ENCODE measurements at regions of chr2 and their contacts with region 1.

Region 1: DNA sequence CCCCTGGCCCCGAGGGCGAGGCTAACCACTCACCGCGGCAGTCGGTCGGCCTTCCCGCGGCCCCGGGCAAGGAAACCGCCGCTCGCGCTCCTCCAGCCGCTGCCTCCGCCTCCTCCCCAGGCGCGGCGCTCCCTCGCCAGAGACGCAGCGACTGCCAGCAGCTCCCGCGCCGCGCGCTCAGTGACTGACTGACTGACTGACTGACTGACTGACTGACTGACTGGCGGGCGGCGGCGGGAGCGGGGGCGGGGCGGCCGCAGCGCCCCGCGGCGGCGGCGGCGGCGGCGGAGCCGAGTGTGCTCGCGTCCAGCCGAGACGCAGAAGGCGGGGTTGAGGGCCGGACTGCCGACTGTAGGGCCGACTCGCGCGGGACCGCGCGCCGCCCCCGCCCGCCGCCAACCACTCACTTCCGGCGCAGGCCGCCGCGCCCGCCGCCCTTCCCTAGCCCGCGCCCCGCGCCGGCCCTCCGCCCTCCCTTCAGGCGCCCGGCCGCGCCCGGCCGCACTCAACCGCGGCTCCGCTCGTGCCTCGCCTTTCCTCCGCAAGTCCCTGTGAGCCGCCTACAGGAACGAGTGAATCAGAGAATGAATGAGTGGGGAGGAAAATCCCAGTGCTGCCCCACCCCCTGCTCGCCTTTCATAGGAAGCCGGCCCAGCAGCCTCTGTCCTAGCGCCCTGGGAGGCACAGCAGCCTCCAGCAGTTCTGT is at the start of gene RAPH1:
- DNase-seq: peak; percentile 89
- ATAC-seq: peak; percentile 82
- H3K4me3 ChIP-seq: peak within 1 kb of the TSS; percentile 93
- H3K27ac ChIP-seq: peak within 1 kb of the TSS; percentile 29
- H3K4me1 ChIP-seq: peaks cover 18% of the 10 kb centered on the region
- H3K27me3 ChIP-seq: no peaks in the 10 kb centered on the region
- CTCF ChIP-seq: no peak
- total RNA-seq, gene RAPH1: 7.0 and 40.3 TPM in 2 replicates

Region 2: DNA sequence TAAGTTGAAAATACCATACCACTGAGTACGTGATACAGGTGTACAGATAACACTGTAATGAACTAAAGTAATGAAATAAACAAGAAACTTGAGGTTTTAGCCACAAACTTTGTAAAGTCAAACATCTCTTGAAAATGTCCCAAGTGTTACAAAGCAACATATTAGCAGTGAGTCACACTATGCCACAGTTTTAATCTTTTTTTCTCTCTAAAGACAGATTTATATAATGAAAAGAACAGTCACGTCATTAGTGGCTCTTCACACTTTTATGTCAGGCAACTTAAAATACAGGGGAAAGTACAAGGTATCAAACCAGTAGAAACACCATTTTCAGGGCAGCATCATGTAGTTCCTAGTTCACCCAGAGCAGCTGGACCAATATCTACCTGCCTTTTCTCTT is 42.3 kb before region 1 on chr2:
- CTCF ChIA-PET with region 1: no interaction called
- POLR2A ChIA-PET with region 1: no interaction called
- intact Hi-C with region 1: loop called (anchors 2 kb)
- DNase-seq: peak; percentile 30
- ATAC-seq: peak; percentile 54
- H3K4me3 ChIP-seq: peak overlapping the region; percentile 31; the same call in 1 of the 2 replicates
- H3K27ac ChIP-seq: peak overlapping the region; percentile 49
- H3K4me1 ChIP-seq: peaks cover 22% of the 10 kb centered on the region
- H3K27me3 ChIP-seq: no peaks in the 10 kb centered on the region
- CTCF ChIP-seq: no peak

Region 3: DNA sequence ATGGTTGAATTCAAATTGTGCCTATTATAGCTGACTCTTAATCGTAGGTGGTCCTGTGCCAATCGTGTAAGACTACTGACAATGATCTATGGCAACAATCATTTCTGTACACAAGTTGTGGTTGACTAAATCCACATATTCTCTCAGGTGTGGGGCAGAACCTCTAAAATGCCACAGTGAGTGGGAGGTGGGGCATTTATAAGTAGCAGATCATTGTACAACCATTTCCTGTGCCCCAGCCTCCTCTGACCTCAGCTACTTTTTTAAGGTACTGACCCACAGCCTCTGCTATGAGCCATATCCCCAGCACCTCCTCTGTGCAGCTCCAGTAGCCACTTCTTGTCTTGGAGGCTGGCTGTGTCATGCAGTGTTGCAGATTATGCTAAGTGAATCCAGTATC is 48.5 kb after region 1 on chr2:
- CTCF ChIA-PET with region 1: no interaction called
- POLR2A ChIA-PET with region 1: no interaction called
- intact Hi-C with region 1: loop called (anchors 2 kb)
- DNase-seq: peak; percentile 88
- ATAC-seq: peak; percentile 74
- H3K4me3 ChIP-seq: no peak overlapping the region
- H3K27ac ChIP-seq: peak overlapping the region; percentile 52
- H3K4me1 ChIP-seq: peaks cover 73% of the 10 kb centered on the region
- H3K27me3 ChIP-seq: no peaks in the 10 kb centered on the region
- CTCF ChIP-seq: no peak

Region 4: GRCh38 chr2:203650860-203651613 is 115.8 kb after region 1 on chr2:
- CTCF ChIA-PET with region 1: interaction called, 3 read pairs
- POLR2A ChIA-PET with region 1: no interaction called
- intact Hi-C with region 1: loop called (anchors 1 kb)
- DNase-seq: peak; percentile 80
- ATAC-seq: peak; percentile 76
- H3K4me3 ChIP-seq: no peak overlapping the region
- H3K27ac ChIP-seq: no peak overlapping the region
- H3K4me1 ChIP-seq: peaks cover 32% of the 10 kb centered on the region
- H3K27me3 ChIP-seq: no peaks in the 10 kb centered on the region
- CTCF ChIP-seq: peak; percentile 78

Region 5: DNA sequence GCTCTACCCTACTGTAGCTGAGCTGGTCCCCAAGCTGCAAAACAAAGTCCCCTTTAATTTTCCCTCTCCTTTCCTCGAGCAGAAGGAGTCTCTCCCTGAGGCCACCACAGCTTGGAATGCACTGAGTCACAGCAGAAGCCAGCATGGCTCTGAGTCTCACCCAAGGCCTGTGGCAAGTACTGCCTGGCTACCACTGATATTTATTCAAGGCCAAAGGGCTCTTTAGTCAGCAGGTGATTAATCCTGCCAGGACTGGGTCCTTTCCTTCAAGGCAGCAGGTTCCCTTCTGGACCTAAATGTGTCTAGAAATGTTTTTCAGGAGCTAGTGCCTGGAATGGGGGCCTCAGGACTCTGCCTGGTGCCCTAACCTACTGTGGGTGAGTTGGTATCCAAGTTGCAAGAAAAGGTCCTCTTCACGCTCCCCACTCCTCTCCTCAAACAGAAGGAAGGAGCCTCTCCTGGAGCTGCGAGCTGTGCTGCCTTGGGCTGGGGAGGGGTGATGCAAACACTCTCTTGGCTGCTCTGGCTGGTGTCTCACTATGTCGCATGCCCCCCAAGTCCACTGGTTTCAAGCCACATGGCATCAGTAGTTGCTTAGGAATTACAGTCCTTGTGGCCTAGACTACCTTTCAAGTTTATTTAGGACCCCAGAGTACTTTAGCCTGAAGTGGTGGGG is 224.6 kb after region 1 on chr2:
- CTCF ChIA-PET with region 1: no interaction called
- POLR2A ChIA-PET with region 1: no interaction called
- intact Hi-C with region 1: loop called (anchors 5 kb)
- DNase-seq: peak; percentile 97
- ATAC-seq: peak; percentile 98
- H3K4me3 ChIP-seq: peak overlapping the region; percentile 22; the same call in 1 of the 2 replicates
- H3K27ac ChIP-seq: peak overlapping the region; percentile 96
- H3K4me1 ChIP-seq: peaks cover 26% of the 10 kb centered on the region
- H3K27me3 ChIP-seq: no peaks in the 10 kb centered on the region
- CTCF ChIP-seq: no peak